ENCODE measurements at regions of chr22 and their contacts with region 1.

Region 1: DNA sequence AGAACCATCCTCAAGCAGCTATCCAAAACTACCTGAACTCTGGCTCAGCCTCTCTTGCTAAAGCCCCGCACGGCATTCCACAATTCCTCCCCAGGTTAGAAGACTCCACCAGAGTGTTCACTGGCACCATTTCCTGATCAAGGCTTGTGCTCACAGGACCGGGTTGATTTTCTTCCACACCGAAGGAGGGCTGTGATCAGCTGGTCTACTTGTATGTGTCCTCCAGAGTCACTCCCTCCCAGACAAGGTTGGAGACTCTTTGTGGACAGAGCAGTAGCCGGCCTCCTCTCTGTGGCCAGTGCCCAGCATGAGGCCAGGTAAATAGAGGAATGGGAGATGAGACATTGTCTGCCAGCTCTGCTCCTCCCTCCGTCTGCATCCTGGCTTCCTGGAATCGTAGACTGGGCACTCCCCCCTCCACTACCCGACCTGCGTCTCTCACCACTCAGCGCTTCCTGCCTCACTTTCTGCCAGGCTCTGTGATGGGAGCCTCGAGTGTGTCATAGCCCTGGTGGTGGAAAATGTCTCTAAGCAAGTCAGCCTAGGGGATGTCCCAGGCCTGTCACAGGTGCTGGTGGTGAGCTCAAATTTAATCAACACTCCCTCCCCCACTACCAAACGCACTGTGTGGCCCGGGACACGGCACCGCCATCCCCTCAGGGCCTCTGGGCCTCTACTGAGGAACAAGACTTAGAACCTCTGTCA is 12.5 kb upstream of the TMPRSS6 start:
- DNase-seq: peak; percentile 84
- H3K4me3 ChIP-seq: no peak overlapping the region
- H3K27ac ChIP-seq: peak overlapping the region; percentile 48
- H3K4me1 ChIP-seq: peaks cover 13% of the 10 kb centered on the region
- H3K27me3 ChIP-seq: no peaks in the 10 kb centered on the region
- CTCF ChIP-seq: peak in 1 of 2 donors; percentile 37

Region 2: DNA sequence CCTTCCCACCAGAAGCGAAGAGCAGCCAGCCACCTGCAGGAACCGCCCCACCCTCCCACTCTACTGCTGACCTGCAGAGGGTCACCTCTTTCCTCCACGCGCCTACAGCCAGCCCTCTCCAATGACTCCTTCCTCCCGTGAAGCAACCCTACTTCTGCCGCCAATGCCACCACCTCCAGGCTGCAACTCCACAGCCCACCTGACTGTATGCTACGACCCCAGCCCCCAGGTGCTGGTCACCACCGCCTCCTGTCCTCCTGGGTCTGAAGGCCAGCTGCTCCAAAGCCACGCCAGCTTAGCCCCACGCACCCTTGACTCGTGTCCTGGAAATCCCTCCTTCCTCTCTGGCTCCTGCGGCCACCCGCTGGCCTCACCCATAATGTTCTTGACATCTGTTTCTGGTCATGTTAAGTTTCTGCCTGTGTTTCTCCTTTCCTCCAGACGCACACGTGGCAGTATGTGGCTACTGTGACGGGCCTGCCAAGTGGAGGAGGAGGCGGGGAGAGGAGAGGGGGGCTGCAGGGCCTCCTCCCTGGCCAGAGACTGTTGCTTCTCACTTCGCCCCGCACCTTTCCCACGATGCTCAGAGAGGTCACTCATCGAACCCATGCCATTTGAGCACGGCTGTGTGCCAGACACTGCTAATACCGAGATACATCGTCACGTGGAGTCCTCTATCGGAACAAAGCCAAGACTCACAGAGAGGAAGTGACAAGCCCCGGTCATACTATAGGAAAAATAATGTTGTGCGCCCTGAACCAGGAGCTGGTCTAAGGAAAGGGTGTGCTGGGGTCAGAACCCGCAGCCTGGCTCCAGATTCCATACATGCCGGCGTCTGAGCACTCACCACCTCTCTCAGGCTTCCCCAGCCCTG is 54.4 kb after region 1 on chr22:
- CTCF ChIA-PET with region 1: no interaction called
- dilution Hi-C with region 1: loop called (anchors 5 kb)
- in situ Hi-C with region 1: no loop called
- intact Hi-C with region 1: no loop called
- DNase-seq: no peak
- H3K4me3 ChIP-seq: no peak overlapping the region
- H3K27ac ChIP-seq: no peak overlapping the region
- H3K4me1 ChIP-seq: peaks cover 7% of the 10 kb centered on the region
- H3K27me3 ChIP-seq: peaks cover 8% of the 10 kb centered on the region
- CTCF ChIP-seq: no peak